BJ (cell line): ENCODE measurements at regions of chr19 and their contacts with region 1.

Region 1: GRCh38 chr19:43446746-43447489 is 18.5 kb downstream of the LYPD3 start:
- DNase-seq: no peak
- H3K4me3 ChIP-seq: no peak overlapping the region
- H3K27me3 ChIP-seq: no peaks in the 10 kb centered on the region; the same call in 1 of the 2 replicates
- CTCF ChIP-seq: peak; percentile 94

Region 2: GRCh38 chr19:43433358-43433673 is 13.6 kb before region 1 on chr19:
- CTCF ChIA-PET with region 1: interaction called, 18 read pairs
- POLR2A ChIA-PET with region 1: no interaction called
- DNase-seq: no peak
- H3K4me3 ChIP-seq: no peak overlapping the region
- H3K27me3 ChIP-seq: peaks cover 2% of the 10 kb centered on the region
- CTCF ChIP-seq: no peak

Region 3: GRCh38 chr19:43463381-43464136 is 16.6 kb after region 1 on chr19:
- CTCF ChIA-PET with region 1: interaction called, 20 read pairs
- POLR2A ChIA-PET with region 1: interaction called, 15 read pairs
- DNase-seq: no peak
- H3K4me3 ChIP-seq: peak overlapping the region; percentile 56
- H3K27me3 ChIP-seq: peaks cover 1% of the 10 kb centered on the region; the same call in 1 of the 2 replicates
- CTCF ChIP-seq: no peak

Region 4: GRCh38 chr19:43503501-43504425 is 56.8 kb after region 1 on chr19:
- CTCF ChIA-PET with region 1: interaction called, 25 read pairs
- POLR2A ChIA-PET with region 1: no interaction called
- DNase-seq: no peak
- H3K4me3 ChIP-seq: peak overlapping the region; percentile 53
- H3K27me3 ChIP-seq: no peaks in the 10 kb centered on the region
- CTCF ChIP-seq: no peak; the same call in 1 of the 2 replicates

Region 5: DNA sequence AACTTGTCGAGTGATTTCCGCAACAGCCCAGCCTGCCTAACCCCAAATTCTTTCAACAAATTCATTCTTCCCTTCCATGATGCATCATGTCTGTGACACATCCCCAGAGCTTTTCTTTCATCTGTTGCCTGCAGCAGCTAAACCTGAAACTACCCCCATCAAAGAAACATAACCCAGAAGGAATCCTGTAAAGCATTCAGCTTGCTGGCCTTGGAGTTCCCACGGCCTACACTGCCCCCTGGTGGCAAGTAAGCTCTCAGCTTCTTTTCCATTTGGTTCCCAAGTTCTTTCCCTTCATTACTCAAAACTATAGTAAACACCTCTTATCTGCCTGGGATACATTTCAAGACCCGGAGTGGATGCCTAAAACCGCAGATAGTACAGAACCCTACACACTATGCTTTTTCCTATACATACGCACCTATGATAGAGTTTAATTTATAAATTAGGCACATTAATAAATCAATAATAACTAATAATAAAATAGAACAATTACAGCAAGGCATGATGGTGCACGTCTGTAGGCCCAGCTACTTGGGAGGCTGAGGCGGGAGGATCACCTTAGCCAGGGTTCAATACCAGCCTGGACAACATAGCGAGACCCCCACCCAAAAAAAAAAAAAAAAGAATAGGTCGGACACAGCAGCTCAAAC is 72.6 kb after region 1 on chr19:
- CTCF ChIA-PET with region 1: interaction called, 214 read pairs
- POLR2A ChIA-PET with region 1: interaction called, 6 read pairs
- DNase-seq: no peak
- H3K4me3 ChIP-seq: no peak overlapping the region
- H3K27me3 ChIP-seq: no peaks in the 10 kb centered on the region
- CTCF ChIP-seq: peak; percentile 89

Region 6: GRCh38 chr19:43526884-43527859 is 80.3 kb after region 1 on chr19 and contains the start of gene ETHE1:
- CTCF ChIA-PET with region 1: interaction called, 214 read pairs
- POLR2A ChIA-PET with region 1: no interaction called
- DNase-seq: no peak
- H3K4me3 ChIP-seq: peak within 1 kb of the TSS; percentile 94
- H3K27me3 ChIP-seq: no peaks in the 10 kb centered on the region
- CTCF ChIP-seq: no peak
- polyA plus RNA-seq, gene ETHE1: 188 and 261 TPM in 2 replicates

Region 7: GRCh38 chr19:43687660-43687997 is 240.7 kb after region 1 on chr19:
- CTCF ChIA-PET with region 1: no interaction called
- POLR2A ChIA-PET with region 1: no interaction called
- DNase-seq: no peak
- H3K4me3 ChIP-seq: no peak overlapping the region
- H3K27me3 ChIP-seq: no peaks in the 10 kb centered on the region
- CTCF ChIP-seq: no peak